ENCODE measurements at regions of chr12 and their contacts with region 1.

Region 1: GRCh38 chr12:105382771-105383622 is 52.5 kb downstream of the C12orf75 start:
- DNase-seq: no peak
- ATAC-seq: peak; percentile 85
- H3K4me3 ChIP-seq: peak overlapping the region; percentile 24
- H3K27ac ChIP-seq: no peak overlapping the region
- H3K4me1 ChIP-seq: no peaks in the 10 kb centered on the region
- H3K27me3 ChIP-seq: no peaks in the 10 kb centered on the region
- CTCF ChIP-seq: peak; percentile 85

Region 2: DNA sequence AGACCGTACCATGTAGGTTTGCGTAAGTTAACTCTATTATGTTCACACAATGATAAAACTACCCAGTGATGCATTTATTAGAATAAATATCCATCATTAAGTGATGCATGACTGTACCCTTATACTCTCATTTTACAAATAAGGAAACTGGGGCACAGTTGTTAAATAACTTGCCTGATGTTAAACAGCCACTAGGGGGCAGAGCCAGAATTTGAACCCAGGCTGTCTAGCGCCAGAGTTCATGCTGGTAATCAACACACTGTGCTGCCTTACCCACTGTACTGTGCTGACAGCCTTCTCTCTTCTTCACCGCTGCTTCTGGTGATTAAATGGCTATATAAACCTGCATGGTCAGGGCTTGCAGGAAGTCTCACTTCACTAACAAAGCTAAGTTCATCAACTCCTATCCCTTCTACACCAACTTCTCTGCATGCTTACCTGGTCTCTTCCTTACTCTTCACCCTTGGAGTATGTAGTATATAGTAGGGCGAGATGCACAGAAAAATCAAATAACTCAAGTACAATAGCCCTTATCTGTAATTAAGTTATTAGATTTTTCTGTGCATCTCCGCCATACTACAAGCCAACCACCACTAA is 103.4 kb before region 1 on chr12:
- intact Hi-C with region 1: loop called (anchors 10 kb)
- DNase-seq: no peak
- ATAC-seq: peak; percentile 68
- H3K4me3 ChIP-seq: no peak overlapping the region
- H3K27ac ChIP-seq: no peak overlapping the region
- H3K4me1 ChIP-seq: no peaks in the 10 kb centered on the region
- H3K27me3 ChIP-seq: peaks cover 4% of the 10 kb centered on the region
- CTCF ChIP-seq: peak; percentile 59

Region 3: GRCh38 chr12:105315726-105316125 is 67.3 kb before region 1 on chr12:
- intact Hi-C with region 1: no loop called
- DNase-seq: no peak
- ATAC-seq: no peak
- H3K4me3 ChIP-seq: no peak overlapping the region
- H3K27ac ChIP-seq: no peak overlapping the region
- H3K4me1 ChIP-seq: no peaks in the 10 kb centered on the region
- H3K27me3 ChIP-seq: no peaks in the 10 kb centered on the region
- CTCF ChIP-seq: no peak

Measured in upper lobe of right lung (tissue), 1 donor.